Dendritic cell treated with granulocyte-macrophage colony-stimulating factor and Interleukin-4, amounts not matched to agents 40 ng/mL and 50 ng/mL, for 4 days (primary cell): ENCODE measurements at regions of chrX and their contacts with region 1.

Region 1: GRCh38 chrX:5113128-5113527 is 1115.5 kb downstream of the NLGN4X start:
- H3K4me3 Mint-ChIP-seq: no peak overlapping the region
- H3K27ac Mint-ChIP-seq: no peak overlapping the region
- H3K4me1 Mint-ChIP-seq: no peaks in the 10 kb centered on the region
- H3K27me3 Mint-ChIP-seq: no peaks in the 10 kb centered on the region

Region 2: DNA sequence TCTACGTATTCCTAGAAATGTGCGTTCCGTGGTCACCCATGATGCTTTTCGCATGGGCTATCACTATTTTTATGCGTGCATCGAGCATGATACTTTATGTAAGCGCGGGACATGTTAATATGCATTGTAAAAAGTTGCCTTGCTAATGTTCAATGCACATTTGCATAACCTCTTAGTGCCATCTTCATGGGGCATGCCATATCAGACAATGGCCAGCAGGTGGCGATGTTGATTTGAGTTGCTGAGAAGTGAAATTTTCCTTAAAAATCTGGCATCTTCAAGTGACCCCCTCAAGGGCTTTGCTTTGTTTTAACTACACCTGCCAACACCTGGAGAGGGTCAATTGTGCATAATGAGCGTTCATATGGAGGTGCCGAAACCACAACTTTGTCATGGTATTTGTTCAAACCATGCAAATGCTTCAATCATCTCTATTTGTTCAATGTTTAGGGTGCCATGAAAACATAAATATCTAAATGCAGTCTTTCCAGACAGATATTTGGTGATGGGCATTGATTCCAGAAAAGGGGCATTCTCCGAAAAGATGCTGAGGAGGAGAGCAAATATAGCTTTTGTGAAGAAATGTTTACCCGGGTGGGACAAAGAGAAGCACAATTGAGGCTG is 565.8 kb before region 1 on chrX:
- intact Hi-C with region 1: loop called (anchors 2 kb)
- H3K4me3 Mint-ChIP-seq: no peak overlapping the region
- H3K27ac Mint-ChIP-seq: no peak overlapping the region
- H3K4me1 Mint-ChIP-seq: no peaks in the 10 kb centered on the region
- H3K27me3 Mint-ChIP-seq: no peaks in the 10 kb centered on the region

Region 3: DNA sequence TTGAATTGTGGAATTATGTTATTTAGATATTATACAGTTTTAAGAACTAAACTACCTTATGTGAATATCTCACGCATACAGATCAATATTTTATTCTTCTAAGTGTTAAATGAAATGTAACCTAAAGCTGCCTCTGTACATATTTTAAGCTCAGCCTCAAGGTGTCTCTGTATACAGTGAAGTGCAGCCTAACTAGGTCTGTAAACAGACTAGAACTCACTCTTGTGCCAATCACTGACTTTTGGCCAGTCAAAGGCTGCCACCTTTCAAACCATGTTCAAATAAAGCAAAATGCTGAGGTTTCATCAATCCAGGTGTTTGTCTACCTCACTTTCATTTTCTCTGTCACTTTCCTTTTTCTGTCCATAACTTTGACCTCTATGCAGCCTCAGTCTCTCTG is 325.1 kb before region 1 on chrX:
- intact Hi-C with region 1: loop called (anchors 10 kb)
- H3K4me3 Mint-ChIP-seq: no peak overlapping the region
- H3K27ac Mint-ChIP-seq: no peak overlapping the region
- H3K4me1 Mint-ChIP-seq: no peaks in the 10 kb centered on the region
- H3K27me3 Mint-ChIP-seq: no peaks in the 10 kb centered on the region

Region 4: GRCh38 chrX:5155031-5155700 is 42.0 kb after region 1 on chrX:
- intact Hi-C with region 1: no loop called
- H3K4me3 Mint-ChIP-seq: no peak overlapping the region
- H3K27ac Mint-ChIP-seq: no peak overlapping the region
- H3K4me1 Mint-ChIP-seq: no peaks in the 10 kb centered on the region
- H3K27me3 Mint-ChIP-seq: no peaks in the 10 kb centered on the region

Region 5: GRCh38 chrX:5876984-5877596 is 764.0 kb after region 1 on chrX:
- intact Hi-C with region 1: loop called (anchors 10 kb)
- H3K4me3 Mint-ChIP-seq: no peak overlapping the region
- H3K27ac Mint-ChIP-seq: no peak overlapping the region
- H3K4me1 Mint-ChIP-seq: no peaks in the 10 kb centered on the region
- H3K27me3 Mint-ChIP-seq: peaks cover 5% of the 10 kb centered on the region